HEK293 (cell line): ENCODE measurements at regions of chr21 and their contacts with region 1.

Region 1: DNA sequence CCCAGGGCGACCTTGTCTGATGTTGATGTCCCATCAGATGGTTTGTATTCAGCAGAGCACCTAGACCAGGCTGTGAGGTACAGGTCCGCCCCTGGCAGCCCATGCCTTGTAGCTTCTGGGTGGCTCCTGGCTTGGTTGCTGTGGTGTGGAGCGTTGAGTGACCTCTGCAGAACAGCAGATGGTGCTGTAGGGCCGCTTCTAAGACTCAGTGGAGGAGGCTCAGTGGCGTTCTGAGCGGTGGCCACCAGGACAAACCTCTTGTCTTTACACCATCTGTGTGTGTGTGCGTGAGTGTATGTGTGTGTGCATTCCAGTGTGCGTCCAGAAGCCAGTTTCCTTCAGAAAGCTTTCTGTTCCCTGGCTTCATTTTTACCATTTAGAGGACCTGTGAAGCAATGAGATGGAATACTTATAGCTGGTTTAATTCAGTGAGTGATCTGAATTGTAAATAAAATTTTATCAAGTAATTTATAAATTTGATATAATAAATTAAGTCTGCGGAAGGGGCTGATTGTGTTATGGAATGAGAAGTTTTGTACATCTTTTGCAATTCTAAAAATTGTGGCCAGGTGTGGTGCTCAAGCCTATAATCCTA is 66.1 kb downstream of the ADARB1 start:
- H3K4me3 ChIP-seq: no peak overlapping the region
- H3K27ac ChIP-seq: no peak overlapping the region
- H3K4me1 ChIP-seq: no peaks in the 10 kb centered on the region
- CTCF ChIP-seq: peak; percentile 98

Region 2: GRCh38 chr21:44510508-44511210 is 629.8 kb before region 1 on chr21:
- CTCF ChIA-PET with region 1: interaction called, 17 read pairs
- POLR2A ChIA-PET with region 1: no interaction called
- H3K4me3 ChIP-seq: peak overlapping the region; percentile 35
- H3K27ac ChIP-seq: no peak overlapping the region
- H3K4me1 ChIP-seq: no peaks in the 10 kb centered on the region; the same call in 1 of the 2 replicates
- CTCF ChIP-seq: peak; percentile 98

Region 3: DNA sequence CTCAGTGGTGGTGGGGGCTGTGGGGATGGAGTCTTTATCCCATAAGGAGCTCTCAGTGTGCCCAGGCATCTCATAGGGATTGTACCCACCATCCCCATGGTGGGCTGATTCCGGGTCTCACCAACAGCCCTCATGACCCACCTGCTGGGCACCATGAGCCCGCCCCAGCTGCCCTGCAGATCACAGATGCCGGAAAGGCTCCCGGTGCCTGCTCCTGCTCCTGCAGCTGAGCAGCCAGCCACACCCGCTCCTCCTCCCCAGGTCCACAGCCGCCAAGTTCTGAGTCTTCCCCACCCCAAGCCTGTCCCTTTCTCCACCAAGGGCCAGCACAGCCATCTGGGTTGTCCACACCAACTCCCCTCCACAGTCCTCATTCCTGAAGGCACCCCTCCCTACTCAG is 413.6 kb before region 1 on chr21:
- CTCF ChIA-PET with region 1: no interaction called
- POLR2A ChIA-PET with region 1: no interaction called
- H3K4me3 ChIP-seq: no peak overlapping the region
- H3K27ac ChIP-seq: no peak overlapping the region
- H3K4me1 ChIP-seq: no peaks in the 10 kb centered on the region
- CTCF ChIP-seq: no peak

Region 4: GRCh38 chr21:44982558-44983244 is 157.7 kb before region 1 on chr21:
- CTCF ChIA-PET with region 1: interaction called, 19 read pairs
- POLR2A ChIA-PET with region 1: no interaction called
- H3K4me3 ChIP-seq: no peak overlapping the region
- H3K27ac ChIP-seq: no peak overlapping the region
- H3K4me1 ChIP-seq: no peaks in the 10 kb centered on the region
- CTCF ChIP-seq: no peak

Region 5: GRCh38 chr21:45087022-45087823 is 53.2 kb before region 1 on chr21:
- CTCF ChIA-PET with region 1: interaction called, 61 read pairs
- POLR2A ChIA-PET with region 1: no interaction called
- H3K4me3 ChIP-seq: no peak overlapping the region
- H3K27ac ChIP-seq: no peak overlapping the region
- H3K4me1 ChIP-seq: no peaks in the 10 kb centered on the region; the same call in 1 of the 2 replicates
- CTCF ChIP-seq: no peak

Region 6: DNA sequence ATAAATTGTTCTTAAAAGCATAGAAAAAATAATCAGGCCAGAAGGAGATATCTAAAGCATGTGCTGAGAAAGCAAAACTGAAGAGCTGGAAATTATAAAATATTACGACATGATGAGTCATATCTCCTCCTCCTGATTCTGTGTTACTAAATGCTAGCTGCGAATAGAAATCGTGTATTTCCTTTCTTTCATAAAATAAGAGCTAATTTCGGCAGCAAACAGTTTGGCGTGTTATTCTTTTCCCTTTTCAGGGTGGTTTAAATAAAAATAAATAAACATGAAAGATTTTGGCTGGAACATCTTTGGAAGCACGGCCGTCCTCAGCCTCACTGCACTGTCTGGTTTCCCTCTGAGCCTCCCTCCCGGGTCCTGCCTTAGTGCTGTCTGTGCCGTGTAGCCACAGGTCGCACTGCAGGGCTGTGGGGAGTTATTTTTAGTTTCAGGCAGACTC is 10.1 kb before region 1 on chr21:
- CTCF ChIA-PET with region 1: interaction called, 187 read pairs
- POLR2A ChIA-PET with region 1: no interaction called
- H3K4me3 ChIP-seq: peak overlapping the region; percentile 8
- H3K27ac ChIP-seq: 0 out of 2 replicates have a peak overlapping the region, but pooled peaks have one; percentile 14
- H3K4me1 ChIP-seq: peaks cover 11% of the 10 kb centered on the region
- CTCF ChIP-seq: no peak

Region 7: DNA sequence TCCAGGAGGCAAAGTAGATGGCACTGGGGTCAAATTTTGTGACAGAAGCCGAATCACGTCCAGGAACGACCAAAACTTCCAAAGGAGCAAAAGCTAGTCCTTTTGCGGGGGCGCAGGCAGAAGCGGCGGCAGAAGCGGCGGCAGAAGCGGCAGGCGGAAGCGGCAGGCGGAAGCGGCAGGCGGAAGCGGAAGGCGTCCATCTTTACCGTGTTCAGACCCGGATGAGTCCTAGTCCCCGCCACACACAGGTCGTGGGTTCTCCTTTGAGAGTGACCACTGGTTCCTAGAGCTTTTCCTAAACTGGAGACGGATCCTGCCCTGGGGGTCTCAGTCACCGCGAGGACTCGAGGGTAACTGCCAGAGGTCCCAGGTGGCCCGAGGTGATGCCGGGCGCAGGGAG is 93.7 kb after region 1 on chr21:
- CTCF ChIA-PET with region 1: interaction called, 11 read pairs
- POLR2A ChIA-PET with region 1: no interaction called
- H3K4me3 ChIP-seq: no peak overlapping the region
- H3K27ac ChIP-seq: no peak overlapping the region
- H3K4me1 ChIP-seq: no peaks in the 10 kb centered on the region
- CTCF ChIP-seq: no peak

Region 8: GRCh38 chr21:45309069-45309986 is 168.9 kb after region 1 on chr21:
- CTCF ChIA-PET with region 1: interaction called, 32 read pairs
- POLR2A ChIA-PET with region 1: no interaction called
- H3K4me3 ChIP-seq: no peak overlapping the region
- H3K27ac ChIP-seq: no peak overlapping the region
- H3K4me1 ChIP-seq: no peaks in the 10 kb centered on the region
- CTCF ChIP-seq: peak; percentile 78

Region 9: DNA sequence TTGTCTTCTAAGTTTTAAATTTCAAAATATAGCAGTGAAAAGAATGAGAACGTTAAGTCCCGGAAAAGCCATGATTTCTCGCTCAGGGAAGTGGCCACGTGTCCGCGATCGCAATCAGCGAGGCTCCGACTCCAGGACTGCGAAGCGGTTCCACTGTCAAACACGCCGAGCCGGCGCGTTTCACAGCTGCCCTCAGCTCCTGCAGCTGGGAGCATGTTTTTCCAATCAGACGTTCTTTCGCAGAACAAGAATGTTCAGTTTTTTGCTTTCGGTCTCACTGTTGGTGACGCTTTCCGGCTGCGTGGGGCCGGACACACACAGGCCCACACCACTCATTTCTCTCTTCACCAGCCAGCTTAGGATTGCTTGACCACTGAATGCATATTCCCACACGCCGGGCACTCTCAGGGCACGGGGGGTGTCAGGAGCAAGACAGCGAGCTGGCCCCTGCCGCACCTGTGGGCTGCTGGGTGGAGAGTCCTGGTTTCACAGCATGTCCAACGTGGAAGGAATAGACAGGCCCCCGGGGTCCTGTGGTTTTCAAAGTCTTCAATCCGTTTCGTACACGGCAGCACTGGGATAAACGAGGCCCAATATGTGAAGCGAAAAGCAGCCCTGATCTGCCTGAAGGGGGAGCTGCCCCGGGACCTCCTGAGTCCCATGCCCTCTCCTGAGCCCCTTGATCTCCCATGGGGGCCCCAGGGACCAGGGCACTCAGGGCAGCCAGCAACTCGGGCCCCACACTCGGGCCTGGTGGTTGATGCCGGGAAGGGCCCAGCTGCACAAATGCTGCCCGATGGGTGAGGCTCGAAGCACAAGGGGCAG is 217.2 kb after region 1 on chr21:
- CTCF ChIA-PET with region 1: no interaction called
- POLR2A ChIA-PET with region 1: no interaction called
- H3K4me3 ChIP-seq: no peak overlapping the region
- H3K27ac ChIP-seq: no peak overlapping the region
- H3K4me1 ChIP-seq: no peaks in the 10 kb centered on the region
- CTCF ChIP-seq: no peak